Gastrocnemius medialis (tissue), 4 donors: ENCODE measurements at regions of chr11 and their contacts with region 1.

Region 1: DNA sequence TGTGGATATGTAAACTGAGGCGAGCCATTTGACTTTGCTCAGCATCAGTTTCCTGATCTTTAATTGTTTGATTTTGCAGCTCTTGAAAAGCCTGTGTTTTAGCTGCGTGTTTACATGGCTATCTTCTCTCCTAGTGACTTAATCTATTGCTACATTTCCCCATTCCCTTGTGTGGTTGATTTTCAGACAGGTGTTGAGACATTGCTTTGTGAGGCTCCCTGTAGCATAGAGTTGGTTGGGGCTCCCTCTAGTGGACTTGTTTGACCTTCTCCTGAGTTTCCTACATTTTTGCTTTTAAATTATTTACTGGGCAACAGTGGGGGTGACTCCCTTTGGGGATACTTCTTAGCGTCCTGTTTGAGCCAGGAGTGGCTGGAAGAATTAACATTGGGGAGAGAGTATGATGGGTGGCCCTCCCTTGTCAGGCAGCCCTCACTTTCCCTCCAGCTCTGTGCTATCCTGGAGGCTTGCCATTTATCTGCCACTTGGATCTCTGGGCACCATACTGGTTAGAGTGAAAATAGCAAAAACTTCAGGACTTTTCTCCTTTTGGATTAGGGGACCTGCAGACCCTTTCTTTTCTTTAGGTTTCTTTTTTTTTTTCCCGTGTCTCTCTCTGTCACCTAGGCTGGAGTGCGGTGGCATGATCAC is 9.2 kb upstream of the CBL start:
- DNase-seq: peak; percentile 50 to 66
- ATAC-seq: peak; percentile 99
- H3K4me3 ChIP-seq: no peak overlapping the region
- H3K27ac ChIP-seq: no peak overlapping the region
- H3K4me1 ChIP-seq: no peaks in the 10 kb centered on the region
- H3K27me3 ChIP-seq: no peaks in the 10 kb centered on the region
- CTCF ChIP-seq: peak; percentile 75 to 85 (median 80)
- POLR2A ChIP-seq: no peak

Region 2: DNA sequence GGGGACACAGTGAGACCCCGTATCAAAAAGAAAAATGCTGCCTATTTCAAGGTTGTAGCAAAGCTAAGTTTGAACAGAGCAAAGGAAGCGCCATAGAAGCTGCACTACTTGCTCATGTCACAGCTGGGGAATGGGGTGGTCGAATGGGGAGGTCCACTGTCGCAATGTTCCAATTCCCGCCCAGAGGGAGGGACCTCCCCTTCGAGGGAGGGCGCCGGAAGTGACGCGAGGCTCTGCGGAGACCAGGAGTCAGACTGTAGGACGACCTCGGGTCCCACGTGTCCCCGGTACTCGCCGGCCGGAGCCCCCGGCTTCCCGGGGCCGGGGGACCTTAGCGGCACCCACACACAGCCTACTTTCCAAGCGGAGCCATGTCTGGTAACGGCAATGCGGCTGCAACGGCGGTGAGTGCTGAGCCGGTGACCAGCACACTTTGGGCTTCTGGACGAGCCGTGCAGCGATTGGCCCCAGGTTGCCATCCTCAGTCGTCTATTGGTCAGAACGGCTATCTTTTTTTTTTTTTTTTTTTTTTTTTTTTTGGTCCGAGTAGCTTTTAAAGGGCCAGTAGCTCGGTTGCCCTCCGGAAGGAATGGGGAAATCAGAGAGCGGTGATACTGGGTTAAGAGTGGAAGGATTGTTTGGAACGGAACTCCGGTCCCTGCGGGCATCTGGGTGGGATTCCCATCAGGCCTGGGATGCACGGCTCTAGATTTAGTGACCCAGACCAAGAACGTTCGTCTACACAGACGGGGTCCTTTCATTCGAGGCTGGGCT is 112.1 kb before region 1 on chr11 and contains the start of gene HMBS:
- in situ Hi-C with region 1: no loop called
- intact Hi-C with region 1: no loop called
- DNase-seq: peak; percentile 87 to 92
- ATAC-seq: peak; percentile 98
- H3K4me3 ChIP-seq: peak within 1 kb of the TSS; percentile 77 to 99 (median 80)
- H3K27ac ChIP-seq: peak within 1 kb of the TSS; percentile 88 to 98 (median 94)
- H3K4me1 ChIP-seq: peaks cover 15 to 17% of the 10 kb centered on the region in 2 donors
- H3K27me3 ChIP-seq: no peaks in the 10 kb centered on the region
- CTCF ChIP-seq: no peak
- POLR2A ChIP-seq: peak; percentile 20 to 49
- total RNA-seq, gene HMBS: 8.7 to 31.1 (median 14.5) TPM

Region 3: DNA sequence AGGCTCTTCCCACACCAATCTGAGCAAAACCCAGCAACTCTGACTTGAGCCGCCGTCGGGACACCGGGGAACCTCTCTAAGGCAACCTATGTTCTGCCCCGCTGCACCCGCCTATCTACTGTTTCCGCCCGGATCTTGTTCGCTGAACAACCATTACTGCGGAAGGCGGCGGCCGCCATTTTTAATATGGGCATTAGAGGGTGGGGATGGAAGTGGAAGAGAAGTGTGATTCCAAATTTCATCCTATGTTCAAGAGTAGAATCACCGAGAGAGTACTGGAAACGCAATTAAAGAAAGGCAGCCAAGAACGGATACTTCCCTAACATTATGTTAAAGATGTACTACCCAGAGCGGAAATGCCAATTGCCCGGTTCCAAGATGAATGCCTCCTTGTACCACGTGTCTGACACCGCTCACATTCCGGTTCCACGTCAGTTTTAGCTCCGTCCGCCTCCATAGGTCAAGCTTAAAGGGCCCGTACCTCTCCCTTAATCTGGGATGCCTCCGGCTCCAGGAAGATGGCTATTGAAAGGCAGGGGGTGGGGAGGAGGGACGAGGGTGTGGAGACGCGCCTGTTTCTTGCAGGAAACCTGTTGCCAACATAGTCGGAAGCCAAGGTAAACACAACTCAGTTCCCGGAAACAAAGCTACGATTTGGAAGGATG is 95.1 kb before region 1 on chr11 and contains the start of gene DPAGT1:
- in situ Hi-C with region 1: loop called in 1 of 4 experiments (anchors 5 kb)
- intact Hi-C with region 1: loop called (anchors 5 kb)
- DNase-seq: peak; percentile 90 to 91
- ATAC-seq: peak; percentile 97 to 98
- H3K4me3 ChIP-seq: peak within 1 kb of the TSS; percentile 74 to 90 (median 79)
- H3K27ac ChIP-seq: peak within 1 kb of the TSS; percentile 88 to 93 (median 90)
- H3K4me1 ChIP-seq: peaks cover 24 to 31% of the 10 kb centered on the region in 2 donors
- H3K27me3 ChIP-seq: no peaks in the 10 kb centered on the region
- CTCF ChIP-seq: peak in 1 of 5 experiments; percentile 29
- POLR2A ChIP-seq: peak; percentile 19 to 43
- total RNA-seq, gene DPAGT1: 8.9 to 34.0 (median 15.1) TPM

Region 4: DNA sequence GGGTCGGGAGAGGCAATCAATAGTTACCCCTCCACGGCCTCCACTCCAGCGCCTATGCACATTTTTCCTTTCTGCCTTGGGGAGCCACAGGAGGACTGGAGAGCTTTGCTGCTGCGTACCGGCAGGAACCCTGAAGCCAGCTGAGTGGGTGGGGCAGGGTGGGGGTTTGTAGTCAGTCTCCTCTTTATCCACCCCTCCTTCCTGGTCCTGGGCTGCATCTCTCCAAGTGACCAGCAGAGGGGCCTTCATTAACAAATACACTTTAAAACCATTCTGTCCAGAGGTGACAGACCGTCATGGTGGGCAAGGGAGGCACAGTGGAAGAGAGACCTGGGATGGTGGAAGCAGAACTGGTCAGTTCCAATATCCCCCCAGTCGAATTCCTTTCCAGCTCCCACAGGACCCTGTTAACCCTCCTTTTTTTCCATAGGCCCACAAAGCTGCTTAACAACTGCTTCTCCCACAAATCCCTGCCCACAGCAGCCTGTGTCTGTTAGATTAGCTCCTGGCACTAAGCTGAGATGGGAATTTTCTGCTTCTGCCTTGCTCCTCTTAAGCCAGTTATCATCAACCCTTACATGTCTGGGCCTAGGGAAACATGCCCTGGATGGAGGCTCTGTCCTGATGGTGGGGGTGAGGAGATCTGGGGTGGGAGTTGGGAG is 52.0 kb before region 1 on chr11:
- in situ Hi-C with region 1: loop called in 1 of 4 experiments (anchors 10 kb)
- intact Hi-C with region 1: loop called (anchors 1 kb)
- DNase-seq: peak; percentile 16 to 43
- ATAC-seq: peak; percentile 81 to 82
- H3K4me3 ChIP-seq: no peak overlapping the region
- H3K27ac ChIP-seq: no peak overlapping the region
- H3K4me1 ChIP-seq: peaks cover 4 to 14% of the 10 kb centered on the region in 2 donors
- H3K27me3 ChIP-seq: peaks cover 4 to 20% (median 7%) of the 10 kb centered on the region in 3 donors
- CTCF ChIP-seq: peak; percentile 39 to 72 (median 60)
- POLR2A ChIP-seq: no peak

Region 5: GRCh38 chr11:119155733-119156492 is 41.0 kb before region 1 on chr11:
- in situ Hi-C with region 1: no loop called
- intact Hi-C with region 1: no loop called
- DNase-seq: no peak
- ATAC-seq: no peak
- H3K4me3 ChIP-seq: no peak overlapping the region
- H3K27ac ChIP-seq: no peak overlapping the region
- H3K4me1 ChIP-seq: no peaks in the 10 kb centered on the region
- H3K27me3 ChIP-seq: no peaks in the 10 kb centered on the region
- CTCF ChIP-seq: no peak
- POLR2A ChIP-seq: no peak

Region 6: GRCh38 chr11:119323538-119324033 is 126.6 kb after region 1 on chr11:
- in situ Hi-C with region 1: loop called in 2 of 4 experiments (anchors 10 kb)
- intact Hi-C with region 1: no loop called
- DNase-seq: peak in 1 of 2 donors; percentile 65
- ATAC-seq: peak; percentile 21 to 50
- H3K4me3 ChIP-seq: no peak overlapping the region
- H3K27ac ChIP-seq: peak overlapping the region in 1 of 4 donors; percentile 85
- H3K4me1 ChIP-seq: peaks cover 8 to 20% of the 10 kb centered on the region in 2 donors
- H3K27me3 ChIP-seq: peaks cover 0 to 10% (median 0%) of the 10 kb centered on the region in 3 donors
- CTCF ChIP-seq: peak; percentile 64 to 86 (median 81)
- POLR2A ChIP-seq: no peak

Region 7: DNA sequence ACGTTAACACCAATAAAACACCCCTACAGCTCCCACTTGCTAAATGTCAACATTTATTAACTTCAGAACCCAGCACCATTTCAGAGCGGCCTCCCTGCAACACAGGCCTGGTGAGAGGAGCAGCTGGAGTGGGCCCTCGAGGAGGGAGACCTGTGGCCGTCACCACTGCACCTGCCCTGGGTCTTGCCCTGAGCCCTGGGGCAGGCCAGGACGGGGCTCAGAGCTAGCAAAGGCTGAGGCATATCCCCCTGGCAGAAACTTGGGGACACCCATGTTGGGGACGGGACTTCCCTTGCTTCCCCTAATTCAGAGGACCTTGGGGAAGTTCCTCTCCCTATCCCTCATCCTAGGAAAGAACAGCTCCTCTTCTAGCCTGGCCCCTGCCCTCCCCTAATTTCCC is 363.3 kb after region 1 on chr11:
- in situ Hi-C with region 1: no loop called
- intact Hi-C with region 1: no loop called
- DNase-seq: no peak
- ATAC-seq: no peak
- H3K4me3 ChIP-seq: no peak overlapping the region
- H3K27ac ChIP-seq: no peak overlapping the region
- H3K4me1 ChIP-seq: no peaks in the 10 kb centered on the region
- H3K27me3 ChIP-seq: no peaks in the 10 kb centered on the region
- CTCF ChIP-seq: no peak
- POLR2A ChIP-seq: no peak